WTC11 (cell line): ENCODE measurements at regions of chr1 and their contacts with region 1.

Region 1: DNA sequence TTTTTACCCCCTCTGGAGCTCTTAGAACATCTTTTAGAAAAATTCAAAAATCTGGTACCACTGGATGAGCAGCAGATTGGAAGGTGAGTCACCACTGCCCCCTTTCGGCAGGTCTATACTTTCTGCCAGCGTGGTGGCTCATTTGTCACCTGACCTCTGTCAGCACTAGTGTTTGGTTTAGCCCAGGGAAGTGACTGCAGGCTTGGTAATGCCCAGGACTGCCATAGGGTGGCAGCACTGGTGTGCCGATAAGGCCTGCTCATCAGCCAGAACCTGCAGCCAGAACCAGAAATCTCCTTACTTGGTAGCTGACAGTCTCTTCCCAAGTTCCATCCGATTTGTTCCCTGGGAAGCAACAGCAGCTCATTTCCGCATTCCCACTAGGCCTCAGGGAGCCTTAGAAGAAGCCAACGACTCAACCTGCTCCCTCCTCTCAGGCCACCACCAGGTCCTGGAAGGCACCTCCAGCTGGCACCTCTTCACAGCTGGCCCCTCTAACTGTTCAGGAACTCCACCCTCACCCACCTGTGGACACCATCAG is 6.8 kb downstream of the SMIM12 start:
- DNase-seq: peak; percentile 97
- ATAC-seq: peak; percentile 98
- H3K4me3 Mint-ChIP-seq: no peak overlapping the region
- H3K27ac Mint-ChIP-seq: peak overlapping the region; percentile 94
- H3K4me1 Mint-ChIP-seq: peaks cover 32% of the 10 kb centered on the region
- H3K27me3 Mint-ChIP-seq: no peaks in the 10 kb centered on the region
- CTCF ChIP-seq: peak; percentile 96

Region 2: DNA sequence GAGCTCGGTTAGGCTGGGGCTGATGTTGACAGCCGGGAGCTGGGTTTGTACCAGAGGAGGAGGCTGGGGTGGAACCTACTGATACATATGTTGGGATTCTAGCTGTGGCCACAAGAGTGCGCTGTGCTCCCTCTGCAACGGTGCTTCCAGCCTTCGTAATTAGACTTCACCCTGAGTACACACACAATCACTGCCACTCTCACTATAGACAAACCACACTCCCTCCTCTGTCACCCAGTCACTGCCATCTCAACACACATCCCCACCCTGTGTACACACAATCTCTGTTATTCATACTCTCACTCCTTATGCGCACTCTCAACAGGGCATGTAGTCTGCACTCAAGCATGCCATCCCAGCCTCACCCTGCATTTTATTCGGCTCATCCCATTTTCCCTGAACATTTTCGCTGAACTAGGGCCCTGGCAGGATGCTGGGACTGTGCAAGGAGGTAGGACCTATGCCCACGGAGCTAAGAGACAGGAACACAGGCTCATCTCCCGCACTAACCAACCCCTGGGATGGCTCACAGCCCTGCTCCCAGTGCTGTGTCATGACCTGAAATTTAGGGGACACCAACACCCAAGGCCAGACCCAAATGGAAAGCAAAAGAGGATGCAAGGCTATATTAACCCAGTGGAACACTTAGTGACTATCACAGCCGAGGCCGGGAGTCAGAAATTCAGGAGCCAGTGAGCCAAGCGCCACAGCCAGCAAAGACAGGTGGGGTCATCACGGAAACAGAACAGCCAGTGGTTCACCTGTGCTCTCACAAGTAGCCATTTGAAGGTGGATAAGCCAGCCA is 66.0 kb before region 1 on chr1:
- CTCF ChIA-PET with region 1: interaction called, 45 read pairs
- POLR2A ChIA-PET with region 1: no interaction called
- DNase-seq: peak; percentile 79
- ATAC-seq: peak; percentile 67
- H3K4me3 Mint-ChIP-seq: no peak overlapping the region
- H3K27ac Mint-ChIP-seq: no peak overlapping the region
- H3K4me1 Mint-ChIP-seq: peaks cover 9% of the 10 kb centered on the region; the same call in 1 of the 2 replicates
- H3K27me3 Mint-ChIP-seq: peaks cover 33% of the 10 kb centered on the region
- CTCF ChIP-seq: peak; percentile 68

Region 3: DNA sequence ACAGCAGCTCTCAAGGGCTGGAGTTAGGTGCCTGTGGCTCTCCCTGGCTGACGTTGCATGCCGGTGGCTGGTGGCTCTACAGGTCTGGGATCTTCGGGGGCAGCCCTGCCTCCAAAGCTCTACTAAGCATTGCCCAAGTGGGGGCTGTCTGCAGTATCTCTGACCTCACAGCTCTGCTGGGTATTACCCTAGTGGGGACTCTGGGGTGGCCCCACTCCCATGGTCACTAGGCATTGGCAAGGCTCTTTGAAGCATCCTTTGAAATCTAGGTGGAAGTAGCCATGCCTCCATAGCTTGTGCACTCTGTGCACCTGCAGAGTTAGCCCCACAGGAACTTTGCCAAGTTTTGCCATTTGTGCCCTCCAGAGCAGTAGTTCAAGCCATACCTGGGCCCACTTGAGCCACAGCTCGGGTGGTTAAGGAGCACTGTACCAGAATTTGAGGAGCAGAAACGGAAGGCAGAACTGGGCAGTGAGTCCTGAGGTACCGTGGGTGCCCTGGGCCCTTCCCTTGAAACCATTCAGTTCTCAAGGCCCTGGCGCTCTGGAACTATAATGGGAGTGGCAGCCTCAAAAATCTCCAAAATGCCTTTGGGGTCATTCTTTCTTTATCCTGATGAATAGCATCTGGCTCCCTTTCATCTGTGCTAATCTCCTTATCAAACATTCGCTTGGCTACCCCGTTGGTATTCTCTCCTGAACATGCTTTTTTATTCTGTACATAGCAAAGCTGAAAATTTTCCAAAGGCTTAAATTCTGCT is 44.5 kb before region 1 on chr1:
- CTCF ChIA-PET with region 1: interaction called, 20 read pairs
- POLR2A ChIA-PET with region 1: no interaction called
- DNase-seq: no peak
- ATAC-seq: no peak
- H3K4me3 Mint-ChIP-seq: no peak overlapping the region
- H3K27ac Mint-ChIP-seq: no peak overlapping the region
- H3K4me1 Mint-ChIP-seq: 0 out of 2 replicates have a peak, but pooled peaks cover 2% of the 10 kb centered on the region
- H3K27me3 Mint-ChIP-seq: peaks cover 3% of the 10 kb centered on the region; the same call in 1 of the 2 replicates
- CTCF ChIP-seq: no peak

Region 4: GRCh38 chr1:34831721-34832246 is 21.0 kb before region 1 on chr1:
- CTCF ChIA-PET with region 1: interaction called, 27 read pairs
- POLR2A ChIA-PET with region 1: no interaction called
- DNase-seq: no peak
- ATAC-seq: no peak
- H3K4me3 Mint-ChIP-seq: no peak overlapping the region
- H3K27ac Mint-ChIP-seq: no peak overlapping the region
- H3K4me1 Mint-ChIP-seq: no peaks in the 10 kb centered on the region
- H3K27me3 Mint-ChIP-seq: no peaks in the 10 kb centered on the region; the same call in 1 of the 2 replicates
- CTCF ChIP-seq: no peak

Region 5: GRCh38 chr1:34879230-34879629 is 26.5 kb after region 1 on chr1:
- CTCF ChIA-PET with region 1: interaction called, 47 read pairs
- POLR2A ChIA-PET with region 1: no interaction called
- DNase-seq: peak; percentile 67
- ATAC-seq: peak; percentile 51; the same call in 1 of the 2 replicates
- H3K4me3 Mint-ChIP-seq: no peak overlapping the region
- H3K27ac Mint-ChIP-seq: no peak overlapping the region
- H3K4me1 Mint-ChIP-seq: 0 out of 2 replicates have a peak, but pooled peaks cover 3% of the 10 kb centered on the region
- H3K27me3 Mint-ChIP-seq: peaks cover 11% of the 10 kb centered on the region
- CTCF ChIP-seq: no peak

Region 6: GRCh38 chr1:34918977-34919561 is 66.3 kb after region 1 on chr1:
- CTCF ChIA-PET with region 1: interaction called, 16 read pairs
- POLR2A ChIA-PET with region 1: no interaction called
- DNase-seq: peak; percentile 76
- ATAC-seq: peak; percentile 84
- H3K4me3 Mint-ChIP-seq: peak overlapping the region; percentile 45
- H3K27ac Mint-ChIP-seq: no peak overlapping the region
- H3K4me1 Mint-ChIP-seq: peaks cover 39% of the 10 kb centered on the region
- H3K27me3 Mint-ChIP-seq: peaks cover 4% of the 10 kb centered on the region
- CTCF ChIP-seq: no peak